HepG2 (cell line): ENCODE measurements at regions of chr15 and their contacts with region 1.

Region 1: DNA sequence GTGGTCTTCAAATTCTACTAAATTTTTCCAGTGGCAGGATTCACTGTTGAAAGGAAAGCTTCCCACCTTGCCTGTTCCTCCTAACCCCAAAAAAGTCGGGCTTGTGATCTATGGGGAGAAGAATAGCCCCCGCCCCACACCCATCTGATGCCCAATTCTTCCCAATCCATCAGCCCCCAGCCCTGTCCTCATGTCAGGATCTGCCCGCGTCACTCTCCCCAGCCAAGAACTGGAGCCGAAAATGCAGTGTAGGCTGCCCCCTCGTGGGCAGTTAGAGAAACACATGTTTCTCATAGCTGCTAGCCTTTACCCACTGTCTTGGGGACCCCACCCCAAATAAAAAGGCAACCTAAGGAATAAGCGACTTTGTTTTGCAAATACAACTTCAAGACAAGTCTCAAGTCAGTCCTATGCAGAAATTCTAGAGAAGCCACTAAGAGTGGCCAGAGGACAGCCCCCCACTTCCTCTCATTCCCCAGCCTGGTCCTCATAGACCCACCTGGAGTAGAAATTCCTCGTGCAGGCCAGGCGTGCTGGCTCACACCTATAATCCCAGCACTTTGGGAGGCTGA is 13.0 kb upstream of the CSK start:
- DNase-seq: peak; percentile 55
- ATAC-seq: peak; percentile 31
- H3K4me3 ChIP-seq: peak overlapping the region; percentile 27 to 58 (median 44); a peak in 5 of 6 replicates
- H3K27ac ChIP-seq: no peak overlapping the region
- H3K4me1 ChIP-seq: peaks cover 36% of the 10 kb centered on the region
- H3K27me3 ChIP-seq: no peaks in the 10 kb centered on the region
- CTCF ChIP-seq: peak; percentile 93
- EP300 ChIP-seq: no peak
- POLR2A ChIP-seq: no peak
- RAD21 ChIP-seq: peak; percentile 87

Region 2: DNA sequence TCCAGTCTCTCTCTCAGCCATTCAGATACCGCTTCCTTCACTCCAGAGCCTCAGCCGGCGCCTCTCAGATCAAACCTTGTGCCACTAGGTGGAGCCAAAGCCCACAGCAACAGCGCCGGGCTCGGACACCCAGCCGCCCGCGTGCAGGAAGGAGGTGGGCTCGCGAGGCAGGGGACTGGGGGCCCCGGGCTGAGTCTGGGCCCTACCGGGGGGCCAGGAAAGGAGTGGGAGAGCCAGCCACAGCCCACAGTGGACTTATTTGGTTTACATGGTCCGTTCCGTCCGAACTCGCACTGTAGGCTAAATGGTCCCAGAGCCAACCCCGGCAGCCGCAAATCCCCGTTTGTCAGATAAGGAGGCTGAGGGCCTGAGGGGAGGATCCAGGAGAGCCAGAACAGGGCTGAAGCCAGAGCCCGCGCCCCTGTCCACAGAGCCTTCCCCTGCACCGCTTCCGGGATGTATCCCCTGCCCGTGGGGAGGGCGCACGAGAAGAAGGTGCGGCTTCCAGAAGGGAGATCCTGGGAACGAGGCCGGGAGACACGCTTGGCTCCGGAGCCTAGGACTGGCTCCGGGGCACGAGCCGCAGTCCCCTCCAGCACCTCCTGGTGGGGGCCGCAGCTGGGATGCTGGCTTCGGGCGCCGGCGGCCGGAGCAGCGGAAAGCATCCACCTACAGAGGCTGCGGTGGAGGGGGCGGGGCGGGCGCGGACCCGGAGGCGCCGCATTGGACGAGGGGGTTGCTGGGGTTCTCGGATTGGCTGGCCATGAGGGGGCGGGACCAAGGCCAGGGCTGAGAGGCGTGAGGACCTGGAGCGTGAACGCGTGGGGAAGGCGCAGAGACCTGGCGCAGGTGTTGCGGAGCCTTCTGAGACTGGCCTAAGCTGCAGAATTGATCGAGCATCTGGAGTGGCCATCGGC is 394.9 kb before region 1 on chr15:
- CTCF ChIA-PET with region 1: no interaction called
- POLR2A ChIA-PET with region 1: no interaction called
- in situ Hi-C with region 1: loop called (anchors 5 kb)
- intact Hi-C with region 1: no loop called
- DNase-seq: peak; percentile 83
- ATAC-seq: peak; percentile 96
- H3K4me3 ChIP-seq: peak overlapping the region; percentile 62 to 77 (median 66)
- H3K27ac ChIP-seq: no peak overlapping the region
- H3K4me1 ChIP-seq: peaks cover 32% of the 10 kb centered on the region
- H3K27me3 ChIP-seq: peaks cover 0 to 32% of the 10 kb centered on the region in 2 experiments; a peak in 4 of 5 replicates
- CTCF ChIP-seq: peak; percentile 97
- EP300 ChIP-seq: no peak
- POLR2A ChIP-seq: no peak
- RAD21 ChIP-seq: peak; percentile 94

Region 3: DNA sequence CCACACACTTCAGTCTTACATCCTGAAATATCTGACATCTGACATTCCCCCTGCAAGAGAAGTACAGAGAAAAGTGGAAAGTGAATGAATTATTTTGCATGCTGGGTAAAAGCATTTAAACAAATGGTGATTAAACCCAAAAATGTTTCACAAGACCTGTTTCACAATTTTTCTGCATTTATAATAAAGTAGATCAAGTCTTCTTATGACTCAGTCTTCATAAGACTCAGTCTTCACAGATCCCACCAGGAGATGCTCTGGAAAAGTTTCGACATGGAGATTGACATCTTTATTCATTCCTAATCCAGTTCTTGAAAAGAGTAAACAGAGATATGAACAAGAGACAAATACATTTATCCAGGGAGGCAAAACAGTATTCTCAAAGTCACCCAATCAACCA is 59.8 kb before region 1 on chr15:
- CTCF ChIA-PET with region 1: no interaction called
- POLR2A ChIA-PET with region 1: no interaction called
- in situ Hi-C with region 1: no loop called
- intact Hi-C with region 1: loop called (anchors 10 kb)
- DNase-seq: no peak
- ATAC-seq: no peak
- H3K4me3 ChIP-seq: no peak overlapping the region
- H3K27ac ChIP-seq: no peak overlapping the region
- H3K4me1 ChIP-seq: peaks cover 13% of the 10 kb centered on the region; the same call in 1 of the 2 replicates
- H3K27me3 ChIP-seq: no peaks in the 10 kb centered on the region
- CTCF ChIP-seq: no peak
- EP300 ChIP-seq: no peak
- POLR2A ChIP-seq: no peak
- RAD21 ChIP-seq: no peak

Region 4: GRCh38 chr15:74781431-74782258 is 12.8 kb after region 1 on chr15 and contains the start of gene CSK:
- CTCF ChIA-PET with region 1: interaction called, 4 read pairs
- POLR2A ChIA-PET with region 1: interaction called, 21 read pairs
- in situ Hi-C with region 1: no loop called
- intact Hi-C with region 1: no loop called
- DNase-seq: no peak
- ATAC-seq: peak; percentile 4
- H3K4me3 ChIP-seq: peak within 1 kb of the TSS; percentile 66 to 84 (median 69)
- H3K27ac ChIP-seq: peak within 1 kb of the TSS; percentile 45
- H3K4me1 ChIP-seq: peaks cover 79% of the 10 kb centered on the region
- H3K27me3 ChIP-seq: no peaks in the 10 kb centered on the region
- CTCF ChIP-seq: peak; percentile 57
- EP300 ChIP-seq: no peak
- POLR2A ChIP-seq: peak in 1 of 2 experiments; percentile 62; a peak in 2 of 4 replicates
- RAD21 ChIP-seq: 0 out of 2 replicates have a peak, but pooled peaks have one; percentile 25
- total RNA-seq, gene CSK: 20.6 and 21.3 TPM in 2 replicates

Region 5: GRCh38 chr15:74799856-74800547 is 31.1 kb after region 1 on chr15:
- CTCF ChIA-PET with region 1: interaction called, 56 read pairs
- POLR2A ChIA-PET with region 1: no interaction called
- in situ Hi-C with region 1: no loop called
- intact Hi-C with region 1: loop called (anchors 1 kb)
- DNase-seq: peak; percentile 43
- ATAC-seq: peak; percentile 92
- H3K4me3 ChIP-seq: no peak overlapping the region
- H3K27ac ChIP-seq: no peak overlapping the region
- H3K4me1 ChIP-seq: peaks cover 13% of the 10 kb centered on the region
- H3K27me3 ChIP-seq: no peaks in the 10 kb centered on the region
- CTCF ChIP-seq: peak; percentile 97
- EP300 ChIP-seq: no peak
- POLR2A ChIP-seq: no peak; a peak in 1 of 4 replicates
- RAD21 ChIP-seq: peak; percentile 96

Region 6: DNA sequence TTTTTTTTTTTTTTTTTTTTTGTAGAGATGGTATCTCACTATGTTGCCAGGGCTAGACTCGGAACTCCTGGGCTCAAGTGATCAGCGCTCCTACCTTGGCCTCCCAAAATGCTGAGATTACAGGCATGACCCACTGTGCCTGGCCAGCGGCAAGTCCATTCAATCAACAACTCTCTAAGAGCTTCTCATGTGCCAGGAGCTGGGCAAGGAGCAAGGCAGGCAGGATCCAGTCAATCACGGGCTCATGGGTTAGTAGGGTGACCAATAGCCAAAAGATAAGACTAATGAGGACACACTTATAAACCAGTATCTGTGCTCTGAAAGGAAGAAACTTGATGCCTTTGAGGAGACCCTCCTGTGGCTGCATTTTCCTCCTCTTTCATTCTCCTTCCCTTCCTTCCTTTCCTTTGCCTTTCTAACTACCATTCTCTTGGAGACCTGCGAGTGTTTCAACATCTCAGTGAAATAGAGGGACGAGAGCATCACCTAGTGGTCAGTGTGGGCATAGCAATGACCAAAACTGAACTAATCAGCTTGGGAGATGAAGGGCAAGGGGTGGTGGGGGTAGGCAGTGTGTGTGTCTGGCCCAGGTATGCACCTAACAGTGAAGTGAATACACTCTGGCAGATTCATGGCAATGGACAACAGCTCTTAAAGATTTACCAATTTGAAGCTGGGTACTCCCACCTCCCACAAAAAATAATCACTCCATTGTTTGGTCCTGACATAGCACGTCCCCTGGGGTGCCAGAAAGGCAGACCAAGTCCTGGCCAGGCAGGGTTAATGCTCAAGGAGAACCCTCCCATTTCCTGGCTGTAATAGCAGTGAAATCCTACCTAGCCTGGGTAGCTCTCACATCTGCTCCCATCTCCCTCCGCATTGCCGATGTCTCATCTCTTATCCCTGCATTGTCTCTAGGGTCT is 181.5 kb after region 1 on chr15:
- CTCF ChIA-PET with region 1: interaction called, 13 read pairs
- POLR2A ChIA-PET with region 1: interaction called, 3 read pairs
- in situ Hi-C with region 1: loop called (anchors 10 kb)
- intact Hi-C with region 1: loop called (anchors 1 kb)
- DNase-seq: peak; percentile 73
- ATAC-seq: peak; percentile 76
- H3K4me3 ChIP-seq: no peak overlapping the region; a peak in 1 of 6 replicates
- H3K27ac ChIP-seq: no peak overlapping the region
- H3K4me1 ChIP-seq: peaks cover 17% of the 10 kb centered on the region
- H3K27me3 ChIP-seq: peaks cover 0 to 15% of the 10 kb centered on the region in 2 experiments; a peak in 3 of 5 replicates
- CTCF ChIP-seq: peak; percentile 97
- EP300 ChIP-seq: no peak
- POLR2A ChIP-seq: no peak
- RAD21 ChIP-seq: peak; percentile 80

Region 7: DNA sequence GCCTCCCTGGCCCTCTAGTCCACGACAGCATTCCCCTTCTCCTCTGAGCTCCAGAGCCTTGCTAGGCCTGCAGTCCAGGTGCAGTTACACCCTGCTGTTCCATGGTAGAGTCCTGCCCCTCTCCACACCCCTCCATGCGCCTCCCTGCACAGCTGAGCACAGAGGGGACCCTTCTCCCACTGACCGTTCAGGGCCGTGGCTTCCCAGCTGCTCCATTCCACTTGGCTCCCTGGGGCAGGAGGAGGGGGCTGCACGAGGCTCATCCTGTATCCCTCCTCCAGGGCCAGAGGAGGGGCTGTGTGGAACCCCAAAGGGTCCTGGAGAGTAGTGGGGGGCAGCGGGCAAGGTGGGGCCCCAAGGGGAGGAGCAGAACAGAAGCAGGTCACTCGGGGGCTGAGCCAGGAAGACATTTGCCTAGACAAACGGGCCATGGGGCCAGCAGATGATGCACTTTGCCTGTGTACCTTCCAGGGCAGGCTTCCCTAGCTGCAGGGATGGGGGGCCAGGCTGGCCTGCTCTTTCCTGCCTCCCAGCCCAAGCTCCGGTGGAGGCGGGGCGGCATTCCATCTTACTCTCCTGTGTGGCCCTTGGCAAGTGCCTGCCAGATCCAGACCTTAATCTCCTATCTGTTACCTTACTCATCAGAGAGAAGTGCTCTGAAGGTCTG is 468.6 kb after region 1 on chr15:
- CTCF ChIA-PET with region 1: no interaction called
- POLR2A ChIA-PET with region 1: no interaction called
- in situ Hi-C with region 1: no loop called
- intact Hi-C with region 1: no loop called
- DNase-seq: no peak
- ATAC-seq: no peak; the same call in 2 of the 3 replicates
- H3K4me3 ChIP-seq: no peak overlapping the region
- H3K27ac ChIP-seq: no peak overlapping the region
- H3K4me1 ChIP-seq: peaks cover 9% of the 10 kb centered on the region; the same call in 1 of the 2 replicates
- H3K27me3 ChIP-seq: peaks cover 7 to 45% of the 10 kb centered on the region in 2 experiments; a peak in 3 of 5 replicates
- CTCF ChIP-seq: no peak
- EP300 ChIP-seq: no peak
- POLR2A ChIP-seq: no peak
- RAD21 ChIP-seq: no peak